Ovary (tissue), 10 donors: ENCODE measurements at regions of chrX and their contacts with region 1.

Region 1: GRCh38 chrX:48083212-48083611 is 11.8 kb upstream of the ZNF630 start:
- DNase-seq: peak; percentile 22 to 48 (median 32)
- H3K4me3 ChIP-seq: no peak overlapping the region
- H3K27ac ChIP-seq: no peak overlapping the region
- H3K4me1 ChIP-seq: no peaks in the 10 kb centered on the region
- H3K27me3 ChIP-seq: no peaks in the 10 kb centered on the region
- CTCF ChIP-seq: peak in 2 of 3 donors; percentile 25 to 42
- EP300 ChIP-seq: no peak
- POLR2A ChIP-seq: no peak

Region 2: DNA sequence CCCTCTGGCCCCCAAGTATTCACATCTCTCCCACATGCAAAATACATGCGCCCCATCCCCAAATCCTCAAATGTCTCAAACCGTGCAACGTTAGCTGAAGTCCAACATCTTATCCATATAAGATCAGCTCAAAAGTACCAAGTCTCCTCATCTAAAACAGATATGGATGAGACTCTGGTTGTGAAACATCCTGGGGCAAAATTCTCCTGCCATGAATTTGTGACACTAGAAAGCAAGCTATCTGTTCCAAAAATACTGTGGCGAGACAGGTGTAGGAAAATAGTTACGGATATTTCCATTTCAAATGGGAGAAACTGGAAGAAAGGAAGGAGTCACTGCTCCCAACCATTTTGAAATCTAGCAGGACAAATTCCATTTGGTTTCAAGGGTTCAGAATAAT is 60.4 kb after region 1 on chrX:
- intact Hi-C with region 1: no loop called
- DNase-seq: no peak
- H3K4me3 ChIP-seq: no peak overlapping the region
- H3K27ac ChIP-seq: no peak overlapping the region
- H3K4me1 ChIP-seq: no peaks in the 10 kb centered on the region
- H3K27me3 ChIP-seq: no peaks in the 10 kb centered on the region
- CTCF ChIP-seq: no peak
- EP300 ChIP-seq: no peak
- POLR2A ChIP-seq: no peak

Region 3: GRCh38 chrX:48156014-48156413 is 72.8 kb after region 1 on chrX:
- intact Hi-C with region 1: no loop called
- DNase-seq: no peak
- H3K4me3 ChIP-seq: no peak overlapping the region
- H3K27ac ChIP-seq: no peak overlapping the region
- H3K4me1 ChIP-seq: no peaks in the 10 kb centered on the region
- H3K27me3 ChIP-seq: no peaks in the 10 kb centered on the region
- CTCF ChIP-seq: no peak
- EP300 ChIP-seq: no peak
- POLR2A ChIP-seq: no peak

Region 4: DNA sequence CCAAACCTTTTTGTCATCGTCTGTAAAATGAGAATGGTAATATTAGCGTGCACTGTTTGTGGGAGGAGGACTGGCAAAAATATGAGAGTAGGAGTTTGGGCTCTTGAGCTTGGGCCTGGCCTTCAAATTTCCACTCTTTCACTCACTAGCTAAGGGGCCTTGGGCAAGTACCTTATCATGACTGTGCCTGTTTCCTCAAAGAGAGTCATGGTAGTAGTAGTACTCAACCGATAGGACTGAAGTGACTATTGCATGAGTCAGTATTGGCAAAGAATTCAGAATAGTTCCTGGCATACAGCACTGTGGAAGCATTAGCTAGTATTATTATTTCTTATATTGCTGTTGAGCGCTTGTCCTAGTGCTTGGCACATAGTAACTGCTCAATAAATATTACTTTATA is 475.1 kb after region 1 on chrX:
- intact Hi-C with region 1: loop called in 1 of 4 experiments (anchors 10 kb)
- DNase-seq: no peak
- H3K4me3 ChIP-seq: no peak overlapping the region
- H3K27ac ChIP-seq: no peak overlapping the region
- H3K4me1 ChIP-seq: no peaks in the 10 kb centered on the region
- H3K27me3 ChIP-seq: no peaks in the 10 kb centered on the region
- CTCF ChIP-seq: no peak
- EP300 ChIP-seq: no peak
- POLR2A ChIP-seq: no peak